ENCODE measurements at regions of chr16 and their contacts with region 1.

Region 1: DNA sequence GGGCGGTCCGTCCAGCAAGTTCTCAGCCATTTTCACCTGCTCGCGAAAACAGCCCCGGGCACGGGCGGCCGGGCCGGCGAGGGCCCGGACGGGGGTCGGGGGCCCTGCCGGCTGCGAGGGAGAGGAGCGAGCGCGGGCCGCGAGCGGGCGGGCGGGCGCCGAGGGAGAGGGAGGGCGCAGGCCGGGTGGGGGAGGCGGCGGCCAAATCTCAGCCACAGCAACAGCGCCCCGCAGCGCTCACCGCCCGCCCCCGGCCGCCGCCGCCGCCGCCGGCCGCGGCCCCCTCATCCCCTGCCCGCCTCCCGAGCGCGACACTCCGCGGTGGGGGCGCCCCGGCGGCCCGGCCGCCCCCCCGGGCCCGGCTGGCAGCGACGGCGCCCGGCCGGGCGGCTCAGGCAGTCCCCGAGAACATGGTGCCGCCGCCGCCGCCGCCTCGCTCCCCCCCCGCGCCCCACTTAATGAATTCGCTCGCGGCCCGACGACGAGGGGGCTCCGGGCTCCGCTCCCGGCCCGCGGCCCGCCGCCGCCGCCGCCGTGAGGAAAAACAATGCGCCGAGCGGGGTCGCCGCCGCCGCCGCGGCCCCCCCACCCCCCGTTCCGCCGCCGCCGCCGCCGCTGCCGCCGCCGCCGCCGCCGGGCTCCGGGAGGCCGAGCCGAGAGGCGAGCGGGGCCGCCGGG is 487 bp downstream of the CREBBP start:
- DNase-seq: peak; percentile 87
- ATAC-seq: peak; percentile 82

Region 2: GRCh38 chr16:3690470-3690928 is 189.5 kb before region 1 on chr16:
- intact Hi-C with region 1: loop called (anchors 5 kb)
- DNase-seq: peak; percentile 94
- ATAC-seq: peak; percentile 96

Region 3: DNA sequence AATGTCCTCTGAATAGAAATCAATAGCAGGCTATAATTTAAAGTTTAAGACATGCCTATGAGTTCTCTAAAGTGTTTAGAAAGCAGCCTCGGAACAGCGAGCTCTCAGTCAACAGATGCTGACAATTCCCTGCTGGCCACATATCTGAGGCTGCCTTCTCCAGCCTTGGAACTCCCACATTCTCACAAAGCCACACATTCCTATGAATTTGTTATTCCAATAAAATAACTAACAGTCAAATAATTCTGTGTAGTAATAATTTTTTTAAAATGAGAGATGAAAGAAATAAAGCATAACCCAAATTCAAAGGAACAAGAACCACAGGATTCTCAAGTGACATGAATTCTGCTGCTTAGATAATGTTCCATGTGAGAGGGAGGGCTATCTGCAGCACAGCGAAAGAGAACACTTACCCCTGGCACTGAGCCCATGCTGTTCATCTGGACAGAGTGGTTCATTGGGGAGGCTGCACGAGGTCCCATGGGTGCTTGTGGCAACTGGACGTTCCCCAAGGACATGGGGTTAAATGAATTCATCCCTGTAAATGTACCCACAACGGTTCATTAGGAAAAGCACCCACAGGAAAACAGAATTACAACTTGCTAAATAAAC is 105.8 kb before region 1 on chr16:
- intact Hi-C with region 1: loop called (anchors 5 kb)
- DNase-seq: peak; percentile 73
- ATAC-seq: peak; percentile 89

Region 4: GRCh38 chr16:3980253-3981111 is 100.5 kb after region 1 on chr16:
- intact Hi-C with region 1: no loop called
- DNase-seq: peak; percentile 37
- ATAC-seq: no peak

Region 5: GRCh38 chr16:4487955-4488498 is 608.0 kb after region 1 on chr16:
- intact Hi-C with region 1: no loop called
- DNase-seq: no peak
- ATAC-seq: peak; percentile 10

Measured in Right ventricle myocardium superior (tissue), 1 donor.